ENCODE measurements at regions of chr1 and their contacts with region 1.

Region 1: GRCh38 chr1:228212966-228213844 is 5.4 kb downstream of the OBSCN start:
- DNase-seq: peak; percentile 95
- H3K4me3 ChIP-seq: peak overlapping the region; percentile 62
- H3K27ac ChIP-seq: peak overlapping the region; percentile 77
- H3K4me1 ChIP-seq: peaks cover 3% of the 10 kb centered on the region
- H3K27me3 ChIP-seq: no peaks in the 10 kb centered on the region
- CTCF ChIP-seq: peak; percentile 73

Region 2: DNA sequence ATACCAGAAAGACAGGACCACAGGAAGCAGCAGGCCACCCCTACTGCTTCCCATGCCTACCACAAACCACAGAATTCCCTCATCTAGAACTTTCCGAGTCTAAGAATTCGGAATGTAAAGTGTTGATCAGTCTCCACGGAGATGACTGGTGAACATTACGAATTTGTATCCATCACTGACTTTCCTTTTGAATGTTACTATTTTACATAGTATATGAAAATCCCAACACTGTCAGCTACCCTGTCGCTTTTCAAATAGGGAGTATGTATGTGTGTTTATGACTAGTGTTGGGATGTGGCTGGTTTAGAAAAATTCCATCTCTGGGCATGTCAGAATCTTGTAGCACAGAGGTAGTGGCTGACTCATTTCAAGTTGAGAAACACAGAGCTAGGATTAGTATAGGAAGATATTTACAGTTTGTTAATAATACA is 1154.9 kb before region 1 on chr1:
- CTCF ChIA-PET with region 1: interaction called, 11 read pairs
- POLR2A ChIA-PET with region 1: no interaction called
- intact Hi-C with region 1: no loop called
- DNase-seq: no peak
- H3K4me3 ChIP-seq: no peak overlapping the region
- H3K27ac ChIP-seq: no peak overlapping the region
- H3K4me1 ChIP-seq: no peaks in the 10 kb centered on the region
- H3K27me3 ChIP-seq: no peaks in the 10 kb centered on the region
- CTCF ChIP-seq: no peak

Region 3: DNA sequence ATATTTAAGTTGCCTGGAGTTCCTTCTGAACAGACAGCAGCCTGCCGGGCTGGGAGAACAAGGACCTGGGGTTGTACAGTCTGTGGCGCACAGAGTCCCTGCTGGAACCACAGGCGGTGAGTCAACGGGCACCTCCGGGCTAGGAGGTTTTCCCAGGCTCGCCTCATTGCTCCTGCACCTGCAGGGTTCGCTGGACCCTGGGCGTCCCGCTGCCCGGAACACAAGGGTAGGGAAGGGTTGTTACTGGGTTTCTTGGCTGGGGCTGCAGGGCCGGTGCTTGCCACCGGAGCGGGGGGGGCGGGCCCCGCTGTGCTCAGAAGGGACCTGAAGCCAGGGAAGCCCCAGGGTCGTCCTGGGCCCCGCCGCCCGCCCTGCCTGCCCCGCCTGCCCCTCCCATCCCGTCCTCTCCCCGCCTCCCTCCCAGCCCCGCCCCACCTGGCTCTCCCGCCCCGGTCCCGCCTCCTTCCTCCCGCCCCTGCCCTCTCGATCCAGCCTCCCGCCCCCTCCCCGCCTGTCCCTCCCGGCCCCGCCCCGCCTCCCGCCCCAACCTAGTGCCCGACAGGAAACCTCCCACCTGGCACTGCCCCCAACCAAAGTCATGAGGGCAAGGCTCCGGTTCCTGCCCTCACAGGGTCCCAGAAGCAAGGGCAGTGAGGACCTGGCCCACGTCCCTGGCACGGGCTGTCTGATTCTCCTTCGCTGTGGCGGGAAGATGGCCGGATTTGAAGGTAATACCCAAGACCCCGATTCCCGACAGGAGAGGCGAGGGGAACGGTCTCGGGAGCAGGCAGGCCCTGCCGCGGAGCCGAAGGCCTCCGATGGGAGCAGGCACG is 484.9 kb before region 1 on chr1:
- CTCF ChIA-PET with region 1: no interaction called
- POLR2A ChIA-PET with region 1: no interaction called
- intact Hi-C with region 1: no loop called
- DNase-seq: peak; percentile 77
- H3K4me3 ChIP-seq: peak overlapping the region; percentile 57
- H3K27ac ChIP-seq: peak overlapping the region; percentile 78
- H3K4me1 ChIP-seq: peaks cover 8% of the 10 kb centered on the region
- H3K27me3 ChIP-seq: no peaks in the 10 kb centered on the region
- CTCF ChIP-seq: no peak

Region 4: GRCh38 chr1:228198977-228199590 is 14.1 kb before region 1 on chr1:
- CTCF ChIA-PET with region 1: interaction called, 10 read pairs
- POLR2A ChIA-PET with region 1: no interaction called
- intact Hi-C with region 1: no loop called
- DNase-seq: no peak
- H3K4me3 ChIP-seq: no peak overlapping the region
- H3K27ac ChIP-seq: no peak overlapping the region
- H3K4me1 ChIP-seq: no peaks in the 10 kb centered on the region
- H3K27me3 ChIP-seq: no peaks in the 10 kb centered on the region
- CTCF ChIP-seq: no peak

Region 5: DNA sequence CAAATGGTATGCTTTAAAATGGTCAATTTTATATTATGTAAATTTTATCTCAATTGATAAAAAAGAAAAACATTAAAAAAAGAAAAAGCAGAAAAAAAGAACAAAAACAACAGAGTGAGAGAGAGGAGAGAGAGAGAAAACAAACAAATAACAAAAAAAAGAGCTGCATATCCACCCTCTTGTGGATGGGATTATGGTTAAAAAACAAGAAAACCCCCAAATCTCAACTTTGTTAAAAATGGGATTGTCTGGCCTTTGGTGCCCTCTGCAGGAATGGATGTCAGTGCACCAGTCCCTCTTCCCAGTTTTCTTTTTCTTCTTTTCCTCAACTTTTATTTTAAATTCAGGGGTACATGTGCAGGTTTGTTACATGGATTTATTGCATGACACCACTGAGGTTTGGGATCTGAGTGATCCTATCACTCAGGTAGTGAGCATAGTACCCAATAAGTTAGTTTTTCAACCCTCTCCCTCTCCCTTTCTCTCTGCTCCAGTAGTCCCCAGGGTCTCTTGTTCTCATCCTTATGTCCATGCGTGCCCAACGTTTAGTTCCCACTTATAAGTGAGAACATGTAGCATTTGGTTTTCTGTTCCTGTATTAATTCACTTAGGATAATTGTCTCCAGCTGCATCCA is 302.1 kb after region 1 on chr1:
- CTCF ChIA-PET with region 1: no interaction called
- POLR2A ChIA-PET with region 1: no interaction called
- intact Hi-C with region 1: loop called (anchors 1 kb)
- DNase-seq: peak; percentile 59
- H3K4me3 ChIP-seq: no peak overlapping the region
- H3K27ac ChIP-seq: no peak overlapping the region
- H3K4me1 ChIP-seq: no peaks in the 10 kb centered on the region
- H3K27me3 ChIP-seq: peaks cover 48% of the 10 kb centered on the region
- CTCF ChIP-seq: peak; percentile 70

Region 6: GRCh38 chr1:229117664-229118300 is 904.6 kb after region 1 on chr1:
- CTCF ChIA-PET with region 1: no interaction called
- POLR2A ChIA-PET with region 1: no interaction called
- intact Hi-C with region 1: no loop called
- DNase-seq: no peak
- H3K4me3 ChIP-seq: no peak overlapping the region
- H3K27ac ChIP-seq: no peak overlapping the region
- H3K4me1 ChIP-seq: peaks cover 6% of the 10 kb centered on the region
- H3K27me3 ChIP-seq: no peaks in the 10 kb centered on the region
- CTCF ChIP-seq: no peak

Measured in A673 (cell line).